ENCODE measurements at regions of chr10 and their contacts with region 1.

Region 1: DNA sequence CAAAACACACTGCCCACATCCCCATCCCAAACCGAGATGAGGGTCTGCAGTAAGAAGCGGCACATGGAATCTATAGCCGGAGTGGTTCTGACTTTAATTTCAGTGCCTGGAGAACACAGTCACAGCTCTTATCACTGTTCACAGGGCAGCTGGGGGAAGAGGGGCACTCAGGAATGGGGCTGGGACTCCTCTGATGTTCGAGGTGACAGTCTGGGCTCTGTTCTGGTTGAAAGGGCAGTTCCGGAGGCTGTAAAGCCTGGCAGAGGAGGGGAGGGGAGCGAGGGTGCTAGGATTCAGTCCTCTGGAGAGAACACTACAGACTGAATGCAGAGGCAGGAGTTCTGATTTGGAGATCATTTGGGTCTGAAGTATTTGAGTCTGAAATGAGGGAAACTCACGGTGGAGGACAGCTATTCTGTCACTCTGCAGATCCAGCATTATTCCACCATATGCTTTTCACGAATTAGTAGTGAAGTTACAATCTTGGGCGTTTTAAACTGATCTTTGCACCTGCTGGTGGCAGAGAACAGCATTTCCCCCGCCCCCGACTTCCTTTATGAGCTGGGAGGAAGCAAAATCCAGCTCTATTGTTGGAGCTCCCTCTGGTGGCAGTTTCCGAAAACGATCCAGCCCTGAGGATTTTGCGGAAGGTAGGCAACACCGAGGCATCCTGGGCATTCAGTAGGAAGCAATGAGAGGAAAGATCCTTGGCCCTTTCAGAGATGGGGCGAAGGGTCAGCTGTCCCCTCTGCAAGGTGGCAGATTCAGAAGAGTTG is 22.7 kb upstream of the KCNK18 start:
- DNase-seq: peak; percentile 67 to 74 (median 71)
- ATAC-seq: peak; percentile 97
- H3K4me3 ChIP-seq: no peak overlapping the region
- H3K27ac ChIP-seq: no peak overlapping the region
- H3K4me1 ChIP-seq: peaks cover 8% of the 10 kb centered on the region in 2 experiments; a peak in 3 of 5 replicates
- H3K27me3 ChIP-seq: peaks cover 0 to 21% of the 10 kb centered on the region in 2 experiments; a peak in 2 of 5 replicates
- CTCF ChIP-seq: peak; percentile 82 to 87 (median 85)
- EP300 ChIP-seq: no peak
- POLR2A ChIP-seq: no peak
- RAD21 ChIP-seq: peak; percentile 55 to 77; a peak in 3 of 4 replicates

Region 2: GRCh38 chr10:115762029-115762428 is 1412.6 kb before region 1 on chr10:
- CTCF ChIA-PET with region 1: no interaction called
- POLR2A ChIA-PET with region 1: no interaction called
- in situ Hi-C with region 1: no loop called
- intact Hi-C with region 1: no loop called
- DNase-seq: no peak
- ATAC-seq: no peak
- H3K4me3 ChIP-seq: no peak overlapping the region
- H3K27ac ChIP-seq: no peak overlapping the region
- H3K4me1 ChIP-seq: no peaks in the 10 kb centered on the region
- H3K27me3 ChIP-seq: no peaks in the 10 kb centered on the region
- CTCF ChIP-seq: no peak
- EP300 ChIP-seq: no peak
- POLR2A ChIP-seq: no peak
- RAD21 ChIP-seq: no peak

Region 3: GRCh38 chr10:116470768-116471415 is 703.7 kb before region 1 on chr10:
- CTCF ChIA-PET with region 1: no interaction called
- POLR2A ChIA-PET with region 1: no interaction called
- in situ Hi-C with region 1: loop called (anchors 25 kb)
- intact Hi-C with region 1: no loop called
- DNase-seq: peak; percentile 6 to 8 (median 6)
- ATAC-seq: peak; percentile 76
- H3K4me3 ChIP-seq: no peak overlapping the region
- H3K27ac ChIP-seq: no peak overlapping the region
- H3K4me1 ChIP-seq: no peaks in the 10 kb centered on the region
- H3K27me3 ChIP-seq: no peaks in the 10 kb centered on the region
- CTCF ChIP-seq: peak in 2 of 3 experiments; percentile 29 to 50; a peak in 2 of 6 replicates
- EP300 ChIP-seq: no peak
- POLR2A ChIP-seq: no peak
- RAD21 ChIP-seq: peak in 1 of 2 experiments; percentile 25; a peak in 2 of 4 replicates

Region 4: DNA sequence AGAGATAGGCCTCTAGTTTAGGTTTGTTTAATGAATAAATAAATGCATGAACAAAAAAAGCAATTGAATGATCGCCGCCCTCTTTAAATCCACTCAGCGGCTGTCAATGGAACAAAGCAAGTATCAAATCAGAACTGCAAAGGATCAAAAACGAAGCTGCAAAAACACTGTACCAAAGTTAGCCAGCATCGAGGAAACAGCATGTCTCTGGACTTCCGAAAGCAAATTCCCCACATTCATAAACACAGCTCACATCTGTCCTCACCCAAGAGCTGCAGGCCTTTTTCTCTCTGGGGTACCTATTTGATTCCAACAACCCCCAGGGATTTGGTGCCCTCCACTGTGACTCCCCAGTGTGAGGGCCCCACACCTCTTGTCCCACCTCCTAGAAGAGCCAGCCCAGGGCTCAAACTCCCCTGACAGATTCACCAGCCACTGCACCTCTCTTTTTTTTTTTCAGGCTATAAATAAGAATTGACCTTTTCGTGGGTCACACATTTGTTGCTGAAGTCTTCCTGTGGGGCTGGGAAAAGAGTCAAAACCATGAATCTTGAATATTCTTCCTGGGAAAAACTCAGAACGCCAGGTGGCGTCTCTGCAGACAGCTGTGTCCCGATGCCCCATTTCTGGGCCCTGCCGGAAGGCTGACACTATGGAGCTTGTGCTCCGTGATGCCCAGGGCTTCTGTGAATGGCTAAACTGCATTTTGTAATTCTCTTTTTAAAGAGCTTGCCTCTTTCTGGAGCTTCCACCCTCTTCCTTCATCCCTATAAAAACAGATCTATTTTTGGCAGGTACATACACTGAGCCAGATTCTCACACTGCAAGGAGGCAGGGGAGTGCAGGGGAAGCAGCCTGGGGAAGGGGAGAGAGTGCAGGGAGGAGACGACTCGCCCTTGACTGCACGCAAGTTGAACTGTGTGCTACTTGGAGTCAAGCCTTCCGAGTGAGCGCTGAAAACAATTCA is 484.0 kb before region 1 on chr10:
- CTCF ChIA-PET with region 1: no interaction called
- POLR2A ChIA-PET with region 1: no interaction called
- in situ Hi-C with region 1: loop called (anchors 10 kb)
- intact Hi-C with region 1: no loop called
- DNase-seq: peak in 2 of 4 experiments; percentile 14 to 17
- ATAC-seq: no peak
- H3K4me3 ChIP-seq: no peak overlapping the region
- H3K27ac ChIP-seq: no peak overlapping the region
- H3K4me1 ChIP-seq: no peaks in the 10 kb centered on the region; a peak in 1 of 5 replicates
- H3K27me3 ChIP-seq: peaks cover 0 to 24% of the 10 kb centered on the region in 2 experiments; a peak in 1 of 5 replicates
- CTCF ChIP-seq: peak; percentile 17 to 30 (median 24); a peak in 3 of 6 replicates
- EP300 ChIP-seq: no peak
- POLR2A ChIP-seq: no peak
- RAD21 ChIP-seq: 0 out of 4 replicates have a peak, but pooled peaks of 1 of the 2 experiments have one; percentile 14

Region 5: GRCh38 chr10:116809483-116810119 is 365.0 kb before region 1 on chr10:
- CTCF ChIA-PET with region 1: interaction called, 3 read pairs
- POLR2A ChIA-PET with region 1: no interaction called
- in situ Hi-C with region 1: loop called (anchors 5 kb)
- intact Hi-C with region 1: no loop called
- DNase-seq: peak; percentile 28 to 53 (median 45)
- ATAC-seq: peak; percentile 86
- H3K4me3 ChIP-seq: no peak overlapping the region
- H3K27ac ChIP-seq: no peak overlapping the region
- H3K4me1 ChIP-seq: no peaks in the 10 kb centered on the region; a peak in 1 of 5 replicates
- H3K27me3 ChIP-seq: peaks cover 7 to 32% of the 10 kb centered on the region in 2 experiments; a peak in 3 of 5 replicates
- CTCF ChIP-seq: peak; percentile 50 to 64 (median 57)
- EP300 ChIP-seq: no peak
- POLR2A ChIP-seq: no peak
- RAD21 ChIP-seq: no peak

Region 6: DNA sequence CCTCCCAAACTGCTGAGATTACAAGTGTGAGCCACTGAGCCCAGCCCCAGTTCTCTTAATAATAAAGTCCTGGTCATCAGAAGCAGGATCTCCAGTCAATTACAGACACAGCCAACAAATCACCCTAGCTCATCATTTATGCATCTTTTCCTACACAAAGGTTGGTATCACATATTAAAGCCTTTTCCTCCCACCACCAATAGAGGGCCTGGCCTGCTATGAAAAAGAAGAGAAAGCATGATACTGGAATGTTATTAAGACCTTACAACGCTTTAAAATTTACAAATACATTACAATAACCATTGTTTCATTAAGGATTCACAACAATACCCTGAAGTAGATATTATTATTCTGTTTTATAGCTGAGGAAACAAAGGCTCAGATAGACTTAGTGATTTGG is 62.4 kb before region 1 on chr10:
- CTCF ChIA-PET with region 1: no interaction called
- POLR2A ChIA-PET with region 1: no interaction called
- in situ Hi-C with region 1: no loop called
- intact Hi-C with region 1: loop called (anchors 10 kb)
- DNase-seq: no peak
- ATAC-seq: no peak
- H3K4me3 ChIP-seq: no peak overlapping the region
- H3K27ac ChIP-seq: no peak overlapping the region
- H3K4me1 ChIP-seq: no peaks in the 10 kb centered on the region
- H3K27me3 ChIP-seq: no peaks in the 10 kb centered on the region
- CTCF ChIP-seq: peak in 2 of 3 experiments; percentile 18 to 23; a peak in 2 of 6 replicates
- EP300 ChIP-seq: no peak
- POLR2A ChIP-seq: no peak
- RAD21 ChIP-seq: peak in 1 of 2 experiments; percentile 10; a peak in 1 of 4 replicates

Region 7: GRCh38 chr10:117159390-117159789 is 15.2 kb before region 1 on chr10:
- CTCF ChIA-PET with region 1: no interaction called
- POLR2A ChIA-PET with region 1: no interaction called
- in situ Hi-C with region 1: no loop called
- intact Hi-C with region 1: no loop called
- DNase-seq: no peak
- ATAC-seq: no peak
- H3K4me3 ChIP-seq: no peak overlapping the region
- H3K27ac ChIP-seq: no peak overlapping the region
- H3K4me1 ChIP-seq: peaks cover 0 to 10% of the 10 kb centered on the region in 2 experiments; a peak in 2 of 5 replicates
- H3K27me3 ChIP-seq: peaks cover 17 to 40% of the 10 kb centered on the region in 2 experiments
- CTCF ChIP-seq: no peak
- EP300 ChIP-seq: no peak
- POLR2A ChIP-seq: no peak
- RAD21 ChIP-seq: no peak

Region 8: GRCh38 chr10:118193642-118194041 is 1019.0 kb after region 1 on chr10:
- CTCF ChIA-PET with region 1: no interaction called
- POLR2A ChIA-PET with region 1: no interaction called
- in situ Hi-C with region 1: no loop called
- intact Hi-C with region 1: no loop called
- DNase-seq: no peak
- ATAC-seq: no peak
- H3K4me3 ChIP-seq: no peak overlapping the region
- H3K27ac ChIP-seq: no peak overlapping the region
- H3K4me1 ChIP-seq: no peaks in the 10 kb centered on the region
- H3K27me3 ChIP-seq: no peaks in the 10 kb centered on the region
- CTCF ChIP-seq: no peak
- EP300 ChIP-seq: no peak
- POLR2A ChIP-seq: no peak
- RAD21 ChIP-seq: no peak